ENCODE measurements at regions of chr12 and their contacts with region 1.

Region 1: DNA sequence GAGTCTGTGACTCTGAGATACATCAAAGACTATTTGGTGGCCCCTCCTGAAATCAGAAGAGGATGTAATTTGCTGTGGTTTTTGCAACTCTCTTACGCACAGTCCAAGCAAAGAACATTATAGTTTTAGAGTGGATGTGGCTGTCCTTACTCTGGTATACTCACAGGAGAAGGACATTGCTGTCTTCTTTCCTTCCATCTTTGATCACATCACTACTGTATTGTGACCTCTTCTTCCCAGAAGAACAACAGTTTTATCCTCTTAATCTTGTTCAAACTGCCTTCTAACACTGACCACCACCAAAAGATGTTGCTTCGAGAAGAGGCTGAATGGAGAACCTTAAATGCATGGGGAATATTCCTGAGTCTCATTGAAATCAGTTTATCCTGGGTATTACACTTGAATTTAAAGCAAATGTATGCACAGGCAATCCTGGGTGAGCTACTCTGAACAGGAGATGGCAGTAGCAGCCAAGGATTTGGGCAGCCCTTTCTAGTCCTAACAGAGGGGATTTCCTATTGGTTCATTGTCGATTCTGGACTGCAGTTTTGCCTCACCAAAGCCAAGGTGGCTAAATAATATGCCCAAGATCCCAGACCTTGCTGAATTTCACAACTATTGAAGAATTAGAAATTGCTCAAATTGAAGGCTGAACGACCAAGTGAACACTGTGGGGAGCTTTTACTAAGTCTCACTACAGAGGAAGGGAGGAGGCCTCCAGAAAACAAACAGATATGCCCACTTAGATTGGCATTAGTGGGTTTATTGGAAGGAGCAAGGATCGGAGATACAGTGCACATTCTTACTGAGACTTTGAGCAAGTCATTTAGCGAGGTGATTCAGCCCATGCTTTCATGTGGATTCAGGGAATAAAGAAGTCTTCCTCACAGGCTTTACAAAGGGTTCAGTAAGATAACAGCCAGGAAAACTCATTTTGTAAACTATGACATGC is 282.8 kb downstream of the PAWR start:
- DNase-seq: peak; percentile 77
- H3K4me3 ChIP-seq: no peak overlapping the region
- CTCF ChIP-seq: peak; percentile 80

Region 2: DNA sequence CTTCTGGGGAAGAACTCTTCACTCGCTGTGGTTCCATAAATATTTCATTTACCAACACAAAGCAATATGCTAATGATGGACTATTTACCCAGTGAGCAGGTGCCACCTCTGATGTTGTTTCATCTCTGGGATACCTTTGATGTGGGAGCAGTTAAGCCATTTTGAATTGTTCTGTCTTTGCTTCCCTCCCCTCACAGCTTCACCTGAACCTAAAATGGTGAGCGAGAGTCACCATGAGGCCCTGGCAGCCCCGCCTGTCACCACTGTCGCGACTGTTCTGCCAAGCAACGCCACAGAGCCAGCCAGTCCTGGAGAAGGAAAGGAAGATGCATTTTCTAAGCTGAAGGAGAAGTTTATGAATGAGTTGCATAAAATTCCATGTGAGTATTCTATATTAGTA is 190.6 kb before region 1 on chr12:
- CTCF ChIA-PET with region 1: no interaction called
- POLR2A ChIA-PET with region 1: no interaction called
- DNase-seq: no peak
- H3K4me3 ChIP-seq: no peak overlapping the region
- CTCF ChIP-seq: no peak

Region 3: GRCh38 chr12:79397609-79398008 is 10.3 kb before region 1 on chr12:
- CTCF ChIA-PET with region 1: interaction called, 11 read pairs
- POLR2A ChIA-PET with region 1: no interaction called
- DNase-seq: no peak
- H3K4me3 ChIP-seq: no peak overlapping the region
- CTCF ChIP-seq: no peak

Region 4: GRCh38 chr12:79420146-79420618 is 12.2 kb after region 1 on chr12:
- CTCF ChIA-PET with region 1: interaction called, 36 read pairs
- POLR2A ChIA-PET with region 1: interaction called, 5 read pairs
- DNase-seq: peak; percentile 93
- H3K4me3 ChIP-seq: no peak overlapping the region
- CTCF ChIP-seq: peak; percentile 45

Region 5: DNA sequence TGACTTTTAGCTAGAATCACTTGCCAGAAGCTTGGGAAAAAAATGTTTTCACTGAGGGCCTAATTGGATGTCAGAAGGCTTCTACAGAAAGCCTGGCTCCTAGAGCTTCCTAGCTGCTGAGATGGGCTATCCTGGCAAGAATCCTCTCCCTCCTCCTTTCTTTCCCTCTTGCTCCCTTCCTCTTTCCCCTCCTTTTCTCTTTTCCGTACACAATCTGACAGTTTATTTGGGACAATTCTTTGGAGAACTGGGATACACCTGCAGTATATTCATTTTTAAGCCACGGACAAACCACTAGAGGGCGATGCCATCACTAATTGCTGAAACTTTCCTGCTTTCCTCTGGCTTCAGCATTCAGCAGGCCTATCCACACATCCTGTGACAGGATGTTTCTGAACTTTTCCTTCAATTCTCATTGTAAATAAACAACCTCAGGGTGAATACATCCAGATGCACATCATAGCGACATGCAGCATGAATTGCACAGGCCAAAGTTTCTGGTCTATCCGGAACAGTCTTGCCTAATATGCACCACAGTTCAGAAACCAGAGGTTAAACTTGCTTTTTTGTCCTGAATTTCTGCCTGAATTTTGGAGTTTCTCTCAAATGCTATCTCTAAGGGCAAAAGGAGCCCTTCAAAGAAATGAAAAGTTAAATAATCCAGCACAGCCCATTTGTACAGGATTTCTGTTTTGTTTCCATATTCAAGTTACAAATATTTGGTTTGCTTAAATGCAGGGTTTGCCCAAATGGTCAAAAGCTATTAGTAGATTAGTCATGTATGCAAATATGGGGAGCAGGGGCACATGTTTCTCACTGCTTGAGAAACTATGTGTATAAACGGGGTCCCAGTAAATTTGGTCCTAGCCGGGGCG is 140.0 kb after region 1 on chr12:
- CTCF ChIA-PET with region 1: interaction called, 18 read pairs
- POLR2A ChIA-PET with region 1: interaction called, 4 read pairs
- DNase-seq: no peak
- H3K4me3 ChIP-seq: no peak overlapping the region
- CTCF ChIP-seq: peak; percentile 55

Region 6: GRCh38 chr12:80186727-80187217 is 778.8 kb after region 1 on chr12:
- CTCF ChIA-PET with region 1: interaction called, 11 read pairs
- POLR2A ChIA-PET with region 1: no interaction called
- DNase-seq: peak; percentile 70
- H3K4me3 ChIP-seq: no peak overlapping the region
- CTCF ChIP-seq: peak; percentile 70

Measured in AG04449 (cell line).